ENCODE measurements at regions of chr17 and their contacts with region 1.

Region 1: DNA sequence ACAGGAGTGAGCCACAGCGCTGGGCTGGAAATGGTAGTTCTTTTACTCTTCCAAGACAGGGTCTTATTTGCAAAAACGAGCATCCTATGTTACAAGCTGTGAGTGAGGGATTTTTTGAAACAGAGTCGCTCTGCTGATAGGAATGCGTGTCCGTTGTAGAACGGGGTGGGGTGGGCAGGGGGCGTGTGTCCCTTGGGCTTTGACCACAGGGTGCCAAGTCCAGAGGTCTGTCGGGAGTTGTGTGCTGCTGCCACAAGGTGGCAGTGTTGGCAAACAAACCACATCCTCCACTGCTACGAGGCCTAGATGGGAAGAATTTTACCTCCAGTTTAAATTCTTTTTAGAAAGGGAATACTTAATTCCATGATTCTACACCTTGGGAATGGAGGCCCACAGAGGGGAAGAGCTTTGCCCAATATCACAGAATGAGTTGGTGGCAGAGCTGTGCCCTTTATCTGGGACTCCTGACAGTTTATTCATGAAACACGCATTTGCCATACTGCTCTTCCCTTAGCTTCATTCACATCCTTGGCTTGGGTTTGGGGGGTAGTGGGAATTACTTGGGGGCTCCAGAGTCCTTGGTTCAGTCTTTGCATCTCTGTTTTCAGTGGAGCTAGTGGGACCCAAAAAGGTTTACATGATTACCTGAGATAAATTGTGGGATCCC is 30.6 kb upstream of the ETV4 start:
- DNase-seq: peak; percentile 84
- H3K4me3 Mint-ChIP-seq: no peak overlapping the region
- H3K27ac Mint-ChIP-seq: no peak overlapping the region
- H3K4me1 Mint-ChIP-seq: peaks cover 37% of the 10 kb centered on the region
- H3K27me3 Mint-ChIP-seq: no peaks in the 10 kb centered on the region
- CTCF ChIP-seq: peak; percentile 95

Region 2: GRCh38 chr17:43521389-43521788 is 55.3 kb before region 1 on chr17:
- CTCF ChIA-PET with region 1: interaction called, 3 read pairs
- intact Hi-C with region 1: loop called (anchors 2 kb)
- DNase-seq: no peak
- H3K4me3 Mint-ChIP-seq: no peak overlapping the region
- H3K27ac Mint-ChIP-seq: no peak overlapping the region
- H3K4me1 Mint-ChIP-seq: no peaks in the 10 kb centered on the region
- H3K27me3 Mint-ChIP-seq: no peaks in the 10 kb centered on the region
- CTCF ChIP-seq: no peak

Region 3: DNA sequence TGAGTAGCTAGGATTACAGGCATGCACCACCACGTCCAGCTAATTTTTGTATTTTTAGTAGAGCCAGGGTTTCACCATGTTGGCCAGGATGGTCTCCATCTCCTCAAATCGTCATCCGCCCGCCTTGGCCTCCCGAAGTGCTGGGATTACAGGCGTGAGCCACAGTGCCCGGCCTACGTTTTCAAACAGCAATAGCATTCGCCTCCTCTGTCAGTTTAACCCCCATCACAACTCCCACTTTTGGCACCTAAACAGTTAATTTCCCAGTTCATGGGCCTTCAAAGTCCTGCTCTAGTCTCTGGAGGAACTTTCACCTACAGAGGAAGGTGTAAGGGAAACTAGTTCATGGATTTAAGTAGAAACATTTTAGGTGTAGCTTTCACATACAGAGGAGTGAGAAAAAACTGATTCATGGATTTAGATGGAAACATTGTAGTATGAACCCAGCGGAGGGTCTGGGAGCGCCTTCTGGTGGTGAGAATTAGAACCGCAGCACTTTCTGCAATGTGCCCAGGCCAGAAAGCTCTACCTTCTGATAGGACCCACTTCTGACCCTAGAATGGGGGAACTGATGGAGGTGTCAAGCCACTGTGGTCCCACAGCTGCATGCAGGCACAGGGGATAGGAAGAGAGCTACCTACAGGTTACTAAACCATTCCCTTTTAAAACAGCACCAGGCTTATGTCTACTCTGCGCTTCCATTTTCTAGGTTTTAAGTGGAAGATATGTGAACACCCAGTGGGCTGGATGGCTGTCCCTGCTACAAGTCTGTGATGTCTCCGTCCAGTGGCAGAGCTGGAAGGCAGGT is 97.0 kb after region 1 on chr17:
- CTCF ChIA-PET with region 1: interaction called, 109 read pairs
- intact Hi-C with region 1: loop called (anchors 1 kb)
- DNase-seq: peak; percentile 85
- H3K4me3 Mint-ChIP-seq: no peak overlapping the region
- H3K27ac Mint-ChIP-seq: no peak overlapping the region
- H3K4me1 Mint-ChIP-seq: peaks cover 19% of the 10 kb centered on the region
- H3K27me3 Mint-ChIP-seq: peaks cover 20% of the 10 kb centered on the region
- CTCF ChIP-seq: peak; percentile 89